ENCODE measurements at regions of chr12 and their contacts with region 1.

Region 1: GRCh38 chr12:54497883-54498282 is 331 bp downstream of the NCKAP1L start:
- DNase-seq: no peak
- H3K4me3 Mint-ChIP-seq: peak overlapping the region; percentile 99
- H3K27ac Mint-ChIP-seq: peak overlapping the region; percentile 96
- H3K4me1 Mint-ChIP-seq: peaks cover 44% of the 10 kb centered on the region
- H3K27me3 Mint-ChIP-seq: no peaks in the 10 kb centered on the region

Region 2: DNA sequence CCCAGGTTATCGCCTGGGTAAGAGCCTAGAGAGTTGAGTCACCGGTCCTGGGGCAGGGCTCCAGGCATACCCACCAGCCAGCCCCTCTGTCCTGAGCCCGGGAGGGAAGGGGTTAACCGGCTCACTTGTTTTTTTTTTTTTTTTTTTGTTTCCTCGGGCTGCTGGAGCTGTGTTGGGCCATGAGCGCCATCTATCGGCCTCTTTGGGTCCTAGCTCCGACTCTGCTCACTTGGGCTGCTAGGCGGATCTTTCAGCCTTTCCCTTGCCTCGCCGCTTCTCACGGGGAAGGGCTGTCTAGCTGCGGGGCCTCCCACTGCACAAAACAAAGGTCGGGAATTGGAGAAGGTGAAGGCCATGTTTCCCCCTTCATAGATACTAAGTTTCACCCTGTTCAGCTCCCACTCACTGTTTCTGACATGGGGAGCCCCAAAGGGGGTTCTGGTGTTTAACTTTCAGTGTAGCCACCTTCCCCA is 306.3 kb before region 1 on chr12:
- intact Hi-C with region 1: loop called (anchors 5 kb)
- DNase-seq: peak; percentile 64
- H3K4me3 Mint-ChIP-seq: no peak overlapping the region
- H3K27ac Mint-ChIP-seq: no peak overlapping the region
- H3K4me1 Mint-ChIP-seq: peaks cover 32% of the 10 kb centered on the region
- H3K27me3 Mint-ChIP-seq: peaks cover 43% of the 10 kb centered on the region

Region 3: GRCh38 chr12:54324617-54325441 is 173.1 kb before region 1 on chr12 and contains the start of gene COPZ1:
- intact Hi-C with region 1: loop called (anchors 1 kb)
- DNase-seq: peak; percentile 91
- H3K4me3 Mint-ChIP-seq: peak within 1 kb of the TSS; percentile 99
- H3K27ac Mint-ChIP-seq: peak within 1 kb of the TSS; percentile 86
- H3K4me1 Mint-ChIP-seq: peaks cover 33% of the 10 kb centered on the region
- H3K27me3 Mint-ChIP-seq: peaks cover 5% of the 10 kb centered on the region
- total RNA-seq, gene COPZ1: 115 and 123 TPM in 2 replicates

Region 4: GRCh38 chr12:54419088-54419892 is 78.6 kb before region 1 on chr12 and contains the start of gene ITGA5:
- intact Hi-C with region 1: loop called (anchors 2 kb)
- DNase-seq: no peak
- H3K4me3 Mint-ChIP-seq: peak within 1 kb of the TSS; percentile 80
- H3K27ac Mint-ChIP-seq: peak within 1 kb of the TSS; percentile 86
- H3K4me1 Mint-ChIP-seq: peaks cover 52% of the 10 kb centered on the region
- H3K27me3 Mint-ChIP-seq: peaks cover 16% of the 10 kb centered on the region
- total RNA-seq, gene ITGA5: 31.2 and 31.6 TPM in 2 replicates

Region 5: GRCh38 chr12:54549774-54550451 is 52.0 kb after region 1 on chr12:
- intact Hi-C with region 1: loop called (anchors 1 kb)
- DNase-seq: peak; percentile 1
- H3K4me3 Mint-ChIP-seq: peak overlapping the region; percentile 84
- H3K27ac Mint-ChIP-seq: no peak overlapping the region
- H3K4me1 Mint-ChIP-seq: peaks cover 48% of the 10 kb centered on the region
- H3K27me3 Mint-ChIP-seq: peaks cover 7% of the 10 kb centered on the region